Mammary epithelial cell (primary cell): ENCODE measurements at regions of chr3 and their contacts with region 1.

Region 1: GRCh38 chr3:38479431-38480092 is 16.6 kb upstream of the EXOG start:
- DNase-seq: peak; percentile 39
- H3K4me3 ChIP-seq: no peak overlapping the region
- H3K27ac ChIP-seq: no peak overlapping the region
- H3K4me1 ChIP-seq: no peaks in the 10 kb centered on the region
- H3K27me3 ChIP-seq: no peaks in the 10 kb centered on the region
- CTCF ChIP-seq: peak; percentile 89 to 96

Region 2: DNA sequence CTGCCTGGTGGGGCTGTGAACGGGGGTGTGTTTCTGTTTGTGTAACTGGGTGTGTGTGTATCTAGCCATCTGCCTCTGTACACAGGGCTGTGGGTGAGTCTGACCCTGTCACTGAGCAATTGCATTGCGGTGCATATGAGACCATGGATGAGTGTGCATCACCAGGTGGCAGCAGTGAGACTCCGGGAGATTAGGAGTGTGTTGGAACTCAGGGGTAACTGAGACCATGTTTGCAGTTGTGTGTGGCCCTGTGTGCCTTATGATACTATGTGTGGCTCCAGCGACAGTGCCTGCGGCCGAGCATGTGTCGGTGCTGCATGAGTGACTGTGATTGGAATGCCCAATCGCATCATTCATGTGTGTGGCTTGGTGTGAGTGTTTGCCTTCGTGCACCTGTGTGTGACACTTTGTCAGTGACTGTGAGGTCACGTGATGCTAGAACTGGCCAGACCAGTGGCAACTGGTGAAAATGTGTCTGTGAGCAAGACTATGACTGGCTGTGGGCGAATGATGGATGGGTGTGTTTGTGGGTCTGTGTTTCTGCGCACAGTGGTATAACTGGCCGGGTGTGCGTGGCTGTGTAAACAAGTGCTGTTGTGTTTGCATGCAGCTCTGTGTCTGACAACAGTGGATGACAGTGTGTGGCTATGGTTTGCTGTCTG is 475.0 kb before region 1 on chr3:
- CTCF ChIA-PET with region 1: no interaction called
- dilution Hi-C with region 1: no loop called
- in situ Hi-C with region 1: no loop called
- intact Hi-C with region 1: loop called (anchors 5 kb)
- DNase-seq: peak; percentile 70
- H3K4me3 ChIP-seq: no peak overlapping the region
- H3K27ac ChIP-seq: no peak overlapping the region
- H3K4me1 ChIP-seq: peaks cover 25% of the 10 kb centered on the region
- H3K27me3 ChIP-seq: no peaks in the 10 kb centered on the region
- CTCF ChIP-seq: peak; percentile 84 to 89

Region 3: GRCh38 chr3:38131621-38132369 is 347.8 kb before region 1 on chr3:
- CTCF ChIA-PET with region 1: no interaction called
- dilution Hi-C with region 1: no loop called
- in situ Hi-C with region 1: loop called in 1 of 2 experiments (anchors 25 kb)
- intact Hi-C with region 1: loop called (anchors 5 kb)
- DNase-seq: no peak
- H3K4me3 ChIP-seq: no peak overlapping the region
- H3K27ac ChIP-seq: no peak overlapping the region
- H3K4me1 ChIP-seq: peaks cover 15% of the 10 kb centered on the region
- H3K27me3 ChIP-seq: no peaks in the 10 kb centered on the region
- CTCF ChIP-seq: peak in 1 of 2 donors; percentile 51

Region 4: DNA sequence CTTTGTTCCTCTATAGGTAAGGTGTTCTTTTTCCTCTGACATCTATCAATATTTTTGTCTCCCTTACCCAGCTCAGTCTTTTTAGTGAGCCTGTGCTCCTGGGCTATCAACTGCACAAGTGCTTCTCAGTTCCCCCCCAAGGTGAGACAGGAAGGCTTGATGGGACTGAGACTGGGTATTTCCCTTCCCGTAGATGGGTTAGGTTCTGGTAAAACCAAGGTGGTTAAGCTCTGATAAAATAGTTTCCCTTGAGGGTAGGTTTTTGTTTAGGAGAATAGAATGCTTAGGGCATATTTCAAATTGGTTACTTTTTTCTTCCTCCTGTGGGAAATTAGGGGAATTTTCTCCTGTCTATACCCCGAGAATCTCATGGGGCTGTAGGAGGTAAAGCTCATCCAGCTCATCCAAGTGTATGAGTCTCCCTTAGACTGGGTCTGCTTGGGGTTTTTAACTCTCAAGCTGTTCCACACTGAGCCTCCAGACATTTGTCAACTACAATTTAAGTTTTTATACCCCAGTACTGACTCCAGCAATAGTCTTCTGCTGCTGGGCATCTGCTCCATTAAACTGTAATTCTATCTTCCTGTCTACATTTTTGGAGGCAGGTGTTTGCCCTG is 269.3 kb before region 1 on chr3:
- CTCF ChIA-PET with region 1: no interaction called
- dilution Hi-C with region 1: no loop called
- in situ Hi-C with region 1: no loop called
- intact Hi-C with region 1: no loop called
- DNase-seq: no peak
- H3K4me3 ChIP-seq: no peak overlapping the region
- H3K27ac ChIP-seq: no peak overlapping the region
- H3K4me1 ChIP-seq: peaks cover 6% of the 10 kb centered on the region
- H3K27me3 ChIP-seq: no peaks in the 10 kb centered on the region
- CTCF ChIP-seq: no peak

Region 5: GRCh38 chr3:38247366-38248035 is 232.1 kb before region 1 on chr3:
- CTCF ChIA-PET with region 1: no interaction called
- dilution Hi-C with region 1: no loop called
- in situ Hi-C with region 1: no loop called
- intact Hi-C with region 1: loop called (anchors 5 kb)
- DNase-seq: peak; percentile 91
- H3K4me3 ChIP-seq: no peak overlapping the region
- H3K27ac ChIP-seq: peak overlapping the region; percentile 53
- H3K4me1 ChIP-seq: peaks cover 12% of the 10 kb centered on the region
- H3K27me3 ChIP-seq: no peaks in the 10 kb centered on the region
- CTCF ChIP-seq: peak; percentile 31 to 55

Region 6: GRCh38 chr3:38281895-38282675 is 197.5 kb before region 1 on chr3 and contains the start of gene SLC22A14:
- CTCF ChIA-PET with region 1: no interaction called
- dilution Hi-C with region 1: no loop called
- in situ Hi-C with region 1: no loop called
- intact Hi-C with region 1: loop called (anchors 10 kb)
- DNase-seq: peak; percentile 58
- H3K4me3 ChIP-seq: no peak within 1 kb of the TSS
- H3K27ac ChIP-seq: no peak within 1 kb of the TSS
- H3K4me1 ChIP-seq: peaks cover 4% of the 10 kb centered on the region
- H3K27me3 ChIP-seq: no peaks in the 10 kb centered on the region
- CTCF ChIP-seq: peak in 1 of 2 donors; percentile 16
- total RNA-seq, gene SLC22A14: 0.33 to 0.75 TPM

Region 7: GRCh38 chr3:38346587-38347410 is 132.8 kb before region 1 on chr3 and contains the start of gene XYLB:
- CTCF ChIA-PET with region 1: interaction called, 7 read pairs
- dilution Hi-C with region 1: no loop called
- in situ Hi-C with region 1: loop called in 1 of 2 experiments (anchors 5 kb)
- intact Hi-C with region 1: loop called (anchors 2 kb)
- DNase-seq: peak; percentile 75
- H3K4me3 ChIP-seq: peak within 1 kb of the TSS; percentile 76 to 91 (median 90)
- H3K27ac ChIP-seq: no peak within 1 kb of the TSS
- H3K4me1 ChIP-seq: peaks cover 4% of the 10 kb centered on the region
- H3K27me3 ChIP-seq: no peaks in the 10 kb centered on the region
- CTCF ChIP-seq: peak; percentile 59 to 88
- total RNA-seq, gene XYLB: 3.0 to 4.5 TPM

Region 8: DNA sequence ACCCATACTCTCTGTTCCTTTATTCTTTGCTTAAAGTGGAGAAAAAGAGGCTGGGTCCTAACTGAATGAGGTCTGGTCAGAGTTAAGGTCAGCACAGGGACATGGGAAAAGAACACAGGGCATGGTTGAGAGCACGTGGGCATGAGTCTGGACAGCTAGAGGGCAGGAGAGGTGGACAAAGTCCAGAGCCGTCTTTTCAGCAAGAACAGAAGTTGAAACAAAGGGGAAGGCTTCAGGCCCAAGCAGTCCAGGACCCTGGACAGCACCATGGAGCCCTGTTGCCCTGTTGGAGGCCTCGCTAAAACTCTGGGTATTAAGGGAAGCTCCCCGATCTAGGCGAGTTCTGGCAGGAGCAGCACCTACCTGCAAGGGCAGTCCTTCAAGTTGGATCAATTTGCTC is 82.2 kb before region 1 on chr3:
- CTCF ChIA-PET with region 1: interaction called, 12 read pairs
- dilution Hi-C with region 1: no loop called
- in situ Hi-C with region 1: no loop called
- intact Hi-C with region 1: no loop called
- DNase-seq: peak; percentile 33
- H3K4me3 ChIP-seq: no peak overlapping the region
- H3K27ac ChIP-seq: no peak overlapping the region
- H3K4me1 ChIP-seq: no peaks in the 10 kb centered on the region
- H3K27me3 ChIP-seq: no peaks in the 10 kb centered on the region
- CTCF ChIP-seq: no peak

Region 9: DNA sequence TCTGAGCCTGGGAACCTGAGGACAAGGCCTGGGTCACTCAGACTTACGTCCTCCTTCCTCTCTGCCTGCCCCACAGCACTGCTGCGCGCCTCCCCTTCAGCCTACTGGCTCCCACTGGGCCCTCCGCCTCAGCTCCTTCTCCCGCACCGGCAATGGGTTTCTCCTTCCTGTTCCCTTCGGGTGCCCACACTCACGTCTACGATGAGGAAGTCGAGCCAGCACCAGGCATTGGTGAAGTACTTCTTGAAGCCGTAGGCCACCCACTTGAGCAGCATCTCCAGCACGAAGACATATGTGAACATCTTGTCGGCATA is 86.6 kb after region 1 on chr3:
- CTCF ChIA-PET with region 1: no interaction called
- dilution Hi-C with region 1: no loop called
- in situ Hi-C with region 1: no loop called
- intact Hi-C with region 1: no loop called
- DNase-seq: no peak
- H3K4me3 ChIP-seq: no peak overlapping the region
- H3K27ac ChIP-seq: no peak overlapping the region
- H3K4me1 ChIP-seq: no peaks in the 10 kb centered on the region
- H3K27me3 ChIP-seq: peaks cover 2% of the 10 kb centered on the region
- CTCF ChIP-seq: no peak